Activated CD8-positive, alpha-beta T cell treated with anti-CD3 and anti-CD28 coated beads for 36 hours (primary cell): ENCODE measurements at regions of chr5 and their contacts with region 1.

Region 1: GRCh38 chr5:157431544-157432200 is 28.3 kb upstream of the NIPAL4 start:
- DNase-seq: peak; percentile 37
- ATAC-seq: peak; percentile 87
- H3K4me3 Mint-ChIP-seq: no peak overlapping the region
- H3K27ac Mint-ChIP-seq: no peak overlapping the region
- H3K4me1 Mint-ChIP-seq: no peaks in the 10 kb centered on the region
- H3K27me3 Mint-ChIP-seq: peaks cover 12% of the 10 kb centered on the region
- CTCF ChIP-seq: peak; percentile 66

Region 2: GRCh38 chr5:157443041-157443549 is 11.4 kb after region 1 on chr5:
- CTCF ChIA-PET with region 1: interaction called, 13 read pairs
- POLR2A ChIA-PET with region 1: interaction called, 3 read pairs
- intact Hi-C with region 1: no loop called
- DNase-seq: no peak
- ATAC-seq: no peak
- H3K4me3 Mint-ChIP-seq: no peak overlapping the region
- H3K27ac Mint-ChIP-seq: no peak overlapping the region
- H3K4me1 Mint-ChIP-seq: no peaks in the 10 kb centered on the region
- H3K27me3 Mint-ChIP-seq: no peaks in the 10 kb centered on the region
- CTCF ChIP-seq: no peak

Region 3: GRCh38 chr5:157464519-157465171 is 33.0 kb after region 1 on chr5:
- CTCF ChIA-PET with region 1: interaction called, 35 read pairs
- POLR2A ChIA-PET with region 1: no interaction called
- intact Hi-C with region 1: no loop called
- DNase-seq: peak; percentile 85
- ATAC-seq: peak; percentile 86
- H3K4me3 Mint-ChIP-seq: no peak overlapping the region
- H3K27ac Mint-ChIP-seq: peak overlapping the region; percentile 47
- H3K4me1 Mint-ChIP-seq: peaks cover 18% of the 10 kb centered on the region
- H3K27me3 Mint-ChIP-seq: peaks cover 20% of the 10 kb centered on the region
- CTCF ChIP-seq: no peak

Region 4: GRCh38 chr5:157476702-157477408 is 45.2 kb after region 1 on chr5:
- CTCF ChIA-PET with region 1: interaction called, 38 read pairs
- POLR2A ChIA-PET with region 1: no interaction called
- intact Hi-C with region 1: loop called (anchors 2 kb)
- DNase-seq: peak; percentile 52
- ATAC-seq: peak; percentile 82
- H3K4me3 Mint-ChIP-seq: no peak overlapping the region
- H3K27ac Mint-ChIP-seq: no peak overlapping the region
- H3K4me1 Mint-ChIP-seq: no peaks in the 10 kb centered on the region
- H3K27me3 Mint-ChIP-seq: no peaks in the 10 kb centered on the region
- CTCF ChIP-seq: peak; percentile 90